ENCODE measurements at regions of chr18 and their contacts with region 1.

Region 1: GRCh38 chr18:49858309-49859020 is 45.1 kb upstream of the ACAA2 start:
- DNase-seq: peak; percentile 43 to 79 (median 62)
- H3K4me3 ChIP-seq: no peak overlapping the region
- H3K27ac ChIP-seq: no peak overlapping the region
- H3K4me1 ChIP-seq: no peaks in the 10 kb centered on the region
- H3K27me3 ChIP-seq: no peaks in the 10 kb centered on the region
- CTCF ChIP-seq: peak; percentile 71 to 94 (median 84)
- POLR2A ChIP-seq: no peak

Region 2: DNA sequence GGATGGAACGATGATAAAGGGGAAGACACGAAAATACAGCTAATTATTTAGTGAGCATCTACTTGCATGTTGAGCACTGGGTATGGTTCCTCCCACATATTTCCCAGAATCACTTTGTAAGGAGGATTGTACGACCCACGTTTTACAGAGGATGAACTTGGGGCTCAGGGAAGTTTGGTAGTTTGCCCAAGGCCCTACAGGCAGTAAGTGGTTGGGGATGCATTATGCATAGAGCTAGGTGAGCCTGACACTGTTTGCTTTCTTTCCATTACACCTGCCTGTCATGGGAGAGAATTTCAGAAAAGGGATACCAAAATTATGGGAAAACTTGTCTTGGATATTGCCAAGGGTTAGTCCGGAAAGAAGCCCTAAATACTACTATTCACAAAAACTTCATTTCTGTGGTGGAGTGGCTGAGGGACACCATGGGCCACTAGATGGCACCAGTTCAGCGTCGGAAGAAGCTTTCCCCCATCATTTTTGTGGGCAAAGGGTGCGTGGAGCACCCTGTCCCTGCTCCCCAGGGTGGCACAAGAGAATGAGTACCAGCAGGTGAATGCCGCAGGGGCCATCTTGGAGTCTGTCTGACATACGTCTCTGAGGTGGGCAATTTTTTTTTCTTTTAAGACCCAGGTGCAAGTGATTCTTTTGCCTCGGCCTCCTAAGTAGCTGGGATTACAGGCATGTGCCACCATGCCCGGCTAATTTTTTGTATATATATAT is 347.9 kb before region 1 on chr18:
- intact Hi-C with region 1: loop called (anchors 2 to 10 kb)
- DNase-seq: peak; percentile 27 to 62 (median 45)
- H3K4me3 ChIP-seq: no peak overlapping the region
- H3K27ac ChIP-seq: no peak overlapping the region
- H3K4me1 ChIP-seq: no peaks in the 10 kb centered on the region
- H3K27me3 ChIP-seq: peaks cover 7% of the 10 kb centered on the region
- CTCF ChIP-seq: peak; percentile 48 to 83 (median 72)
- POLR2A ChIP-seq: no peak

Region 3: GRCh38 chr18:49558356-49558755 is 300.1 kb before region 1 on chr18:
- intact Hi-C with region 1: loop called in 1 of 2 experiments (anchors 2 kb)
- DNase-seq: peak in 1 of 7 donors; percentile 11
- H3K4me3 ChIP-seq: no peak overlapping the region
- H3K27ac ChIP-seq: no peak overlapping the region
- H3K4me1 ChIP-seq: peaks cover 0 to 19% of the 10 kb centered on the region in 2 donors
- H3K27me3 ChIP-seq: peaks cover 25% of the 10 kb centered on the region
- CTCF ChIP-seq: no peak
- POLR2A ChIP-seq: no peak

Region 4: GRCh38 chr18:49898421-49898820 is 40.0 kb after region 1 on chr18:
- intact Hi-C with region 1: no loop called
- DNase-seq: peak; percentile 43 to 72 (median 65)
- H3K4me3 ChIP-seq: no peak overlapping the region
- H3K27ac ChIP-seq: no peak overlapping the region
- H3K4me1 ChIP-seq: no peaks in the 10 kb centered on the region
- H3K27me3 ChIP-seq: no peaks in the 10 kb centered on the region
- CTCF ChIP-seq: no peak
- POLR2A ChIP-seq: no peak

Region 5: GRCh38 chr18:49920731-49921130 is 62.3 kb after region 1 on chr18:
- intact Hi-C with region 1: no loop called
- DNase-seq: no peak
- H3K4me3 ChIP-seq: no peak overlapping the region
- H3K27ac ChIP-seq: no peak overlapping the region
- H3K4me1 ChIP-seq: no peaks in the 10 kb centered on the region
- H3K27me3 ChIP-seq: peaks cover 4% of the 10 kb centered on the region
- CTCF ChIP-seq: no peak
- POLR2A ChIP-seq: no peak

Region 6: GRCh38 chr18:50071397-50071796 is 212.9 kb after region 1 on chr18:
- intact Hi-C with region 1: no loop called
- DNase-seq: no peak
- H3K4me3 ChIP-seq: no peak overlapping the region
- H3K27ac ChIP-seq: no peak overlapping the region
- H3K4me1 ChIP-seq: no peaks in the 10 kb centered on the region
- H3K27me3 ChIP-seq: no peaks in the 10 kb centered on the region
- CTCF ChIP-seq: no peak
- POLR2A ChIP-seq: no peak